Adrenal gland (tissue), 19 donors: ENCODE measurements at regions of chr2 and their contacts with region 1.

Region 1: GRCh38 chr2:155372969-155373368 is 674.5 kb downstream of the KCNJ3 start:
- DNase-seq: no peak
- H3K4me3 ChIP-seq: no peak overlapping the region
- H3K27ac ChIP-seq: no peak overlapping the region
- H3K4me1 ChIP-seq: no peaks in the 10 kb centered on the region
- H3K27me3 ChIP-seq: peaks cover 6% of the 10 kb centered on the region
- CTCF ChIP-seq: peak in 1 of 6 experiments; percentile 10
- POLR2A ChIP-seq: no peak

Region 2: GRCh38 chr2:154960802-154961583 is 412.0 kb before region 1 on chr2:
- intact Hi-C with region 1: no loop called
- DNase-seq: no peak
- H3K4me3 ChIP-seq: no peak overlapping the region
- H3K27ac ChIP-seq: no peak overlapping the region
- H3K4me1 ChIP-seq: no peaks in the 10 kb centered on the region
- H3K27me3 ChIP-seq: no peaks in the 10 kb centered on the region
- CTCF ChIP-seq: no peak
- POLR2A ChIP-seq: no peak

Region 3: DNA sequence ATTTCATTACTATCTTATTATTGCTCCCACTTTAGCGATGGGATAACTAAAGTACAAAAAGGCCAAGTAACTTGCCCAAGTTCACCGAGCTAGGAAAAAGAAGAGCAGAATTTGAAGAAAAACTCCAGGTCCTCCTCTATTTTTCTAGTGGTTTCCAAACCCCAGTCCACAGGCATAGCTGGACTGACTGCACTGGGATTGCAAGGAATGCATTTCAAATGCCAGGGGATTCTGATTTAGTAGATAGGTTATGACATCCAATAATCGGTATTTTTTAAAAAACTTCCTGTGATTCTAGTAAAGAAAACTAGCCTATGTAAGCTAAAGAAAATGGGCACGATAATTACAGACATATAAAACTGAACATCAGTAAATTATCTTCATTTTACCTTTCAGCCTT is 1821.9 kb after region 1 on chr2:
- intact Hi-C with region 1: loop called in 1 of 2 experiments (anchors 5 kb)
- DNase-seq: no peak
- H3K4me3 ChIP-seq: no peak overlapping the region
- H3K27ac ChIP-seq: no peak overlapping the region
- H3K4me1 ChIP-seq: no peaks in the 10 kb centered on the region
- H3K27me3 ChIP-seq: no peaks in the 10 kb centered on the region
- CTCF ChIP-seq: no peak
- POLR2A ChIP-seq: no peak